ENCODE measurements at regions of chr9 and their contacts with region 1.

Region 1: DNA sequence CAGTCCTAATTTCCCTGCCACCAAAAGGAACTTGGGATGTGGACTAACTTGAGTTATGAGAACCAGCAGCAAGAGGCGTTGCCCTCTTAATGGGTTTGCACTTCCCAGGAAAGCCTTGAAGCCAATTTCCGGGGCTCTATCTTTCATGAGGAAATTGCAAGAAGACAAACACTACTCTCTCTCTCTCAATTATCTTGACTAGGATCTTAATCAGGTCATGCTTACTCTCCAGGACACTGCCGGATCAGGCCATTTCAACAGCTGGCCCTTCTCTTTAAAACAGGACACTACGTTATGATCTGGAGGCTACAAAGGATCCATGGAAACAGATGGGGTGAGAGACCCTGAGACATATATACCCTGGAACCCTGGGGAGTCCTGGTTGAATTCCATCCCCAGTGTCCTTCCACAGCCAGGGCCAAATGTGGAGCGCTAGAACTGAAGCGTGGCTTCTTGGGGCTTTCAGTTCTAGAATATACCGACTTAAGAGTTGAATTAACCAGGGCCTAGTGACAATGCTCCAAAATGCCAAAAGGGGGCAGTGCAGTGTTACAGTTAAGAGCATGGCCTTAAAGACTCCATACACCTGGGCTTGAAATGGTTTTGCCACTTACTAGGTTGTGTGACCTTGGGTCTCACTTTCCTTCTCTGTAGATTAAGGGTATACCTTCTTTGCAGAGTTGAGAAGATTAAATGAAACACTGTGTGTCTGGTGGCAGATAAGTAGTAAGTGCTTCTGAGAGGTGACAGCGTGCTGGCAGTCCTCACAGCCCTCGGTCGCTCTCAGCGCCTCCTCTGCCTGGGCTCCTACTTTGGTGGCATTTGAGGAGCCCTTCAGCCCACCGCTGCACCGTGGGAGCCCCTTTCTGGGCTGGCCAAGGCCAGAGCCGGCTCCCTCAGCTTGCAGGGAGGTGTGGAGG is 21.1 kb downstream of the FAM219A start:
- DNase-seq: peak; percentile 65
- H3K4me3 Mint-ChIP-seq: no peak overlapping the region
- H3K27ac Mint-ChIP-seq: no peak overlapping the region
- H3K4me1 Mint-ChIP-seq: peaks cover 6% of the 10 kb centered on the region
- H3K27me3 Mint-ChIP-seq: no peaks in the 10 kb centered on the region

Region 2: GRCh38 chr9:34500623-34501267 is 63.5 kb after region 1 on chr9:
- CTCF ChIA-PET with region 1: interaction called, 25 read pairs
- POLR2A ChIA-PET with region 1: no interaction called
- DNase-seq: peak; percentile 75
- H3K4me3 Mint-ChIP-seq: no peak overlapping the region
- H3K27ac Mint-ChIP-seq: no peak overlapping the region
- H3K4me1 Mint-ChIP-seq: peaks cover 9% of the 10 kb centered on the region
- H3K27me3 Mint-ChIP-seq: peaks cover 13% of the 10 kb centered on the region

Region 3: DNA sequence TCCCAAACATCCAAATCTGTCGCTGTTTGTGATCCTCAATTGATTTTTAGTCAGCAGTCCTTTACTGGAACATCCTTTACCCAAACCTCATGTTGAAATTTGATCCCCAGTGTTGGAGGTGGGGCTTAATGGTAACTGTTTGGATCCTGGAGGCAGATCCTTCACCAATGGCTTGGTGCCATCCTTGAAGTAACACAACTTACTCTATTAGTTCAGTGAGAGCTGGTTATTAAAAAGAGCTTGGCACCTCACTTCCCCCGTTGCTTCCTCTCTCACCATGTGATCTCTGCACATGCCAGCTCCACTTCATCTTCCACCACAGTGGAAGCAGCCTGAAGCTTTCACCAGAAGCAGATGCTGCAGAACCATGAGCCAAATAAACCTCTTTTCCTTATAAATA is 592.6 kb after region 1 on chr9:
- CTCF ChIA-PET with region 1: no interaction called
- POLR2A ChIA-PET with region 1: no interaction called
- DNase-seq: no peak
- H3K4me3 Mint-ChIP-seq: no peak overlapping the region
- H3K27ac Mint-ChIP-seq: no peak overlapping the region
- H3K4me1 Mint-ChIP-seq: peaks cover 13% of the 10 kb centered on the region
- H3K27me3 Mint-ChIP-seq: no peaks in the 10 kb centered on the region

Region 4: DNA sequence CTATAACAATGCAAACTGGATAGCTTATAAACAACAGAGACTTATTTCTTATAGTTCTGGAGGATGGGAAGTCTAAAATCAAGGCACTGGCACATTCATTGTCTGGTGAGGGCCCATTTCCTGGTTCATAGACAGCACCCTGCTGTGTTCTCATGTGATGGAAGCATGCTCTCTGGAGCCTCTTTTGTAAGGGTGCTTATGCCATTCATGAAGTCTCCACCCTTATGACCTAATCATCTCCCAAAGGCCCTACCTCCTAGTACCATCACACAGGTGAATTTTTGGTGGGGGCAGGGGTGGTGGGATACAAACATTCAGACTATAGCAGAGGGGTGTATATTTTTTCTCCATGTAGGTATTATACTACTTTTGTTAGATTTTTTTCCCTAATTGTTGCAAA is 817.0 kb after region 1 on chr9:
- CTCF ChIA-PET with region 1: no interaction called
- POLR2A ChIA-PET with region 1: no interaction called
- DNase-seq: no peak
- H3K4me3 Mint-ChIP-seq: no peak overlapping the region
- H3K27ac Mint-ChIP-seq: no peak overlapping the region
- H3K4me1 Mint-ChIP-seq: peaks cover 3% of the 10 kb centered on the region
- H3K27me3 Mint-ChIP-seq: peaks cover 4% of the 10 kb centered on the region